Common myeloid progenitor, CD34-positive (primary cell): ENCODE measurements at regions of chr10 and their contacts with region 1.

Region 1: DNA sequence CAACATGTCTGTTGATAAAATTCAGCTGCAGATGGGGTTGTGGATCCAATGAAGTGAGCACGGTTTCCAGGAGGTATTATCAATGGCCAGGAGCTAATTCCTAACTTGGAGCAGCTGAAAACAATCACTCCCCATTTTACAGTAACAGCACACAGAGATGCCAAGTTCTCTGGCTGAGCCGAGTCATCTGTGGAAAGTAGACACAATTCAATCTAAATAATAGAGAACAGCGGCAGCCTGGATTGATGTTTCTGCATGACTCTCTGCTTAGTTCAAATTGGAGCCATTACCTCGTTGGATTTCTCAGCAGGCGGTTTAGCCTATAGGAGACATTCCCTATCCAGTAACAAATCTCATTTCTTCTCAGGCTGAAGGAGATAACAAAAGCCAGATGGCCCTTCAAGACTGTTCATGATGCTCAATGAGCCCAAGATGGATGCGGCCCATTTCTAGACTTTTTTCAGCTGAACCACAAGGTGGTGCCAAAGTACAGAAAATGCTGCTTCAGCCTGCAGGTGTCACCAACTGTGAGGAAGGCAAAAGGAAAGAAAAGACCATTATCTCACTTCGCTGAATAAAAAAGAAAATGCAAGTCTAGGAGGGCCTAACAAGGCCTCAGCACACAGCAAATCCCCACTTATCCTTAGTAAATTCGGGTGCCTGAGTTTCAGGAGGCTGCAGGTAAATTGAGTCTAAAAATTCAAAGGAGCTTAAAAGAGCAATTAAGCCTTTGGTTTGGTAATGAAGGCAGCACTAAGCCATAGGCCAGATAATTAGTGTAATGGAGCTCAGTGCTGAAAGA is 83.7 kb downstream of the SLC16A9 start:
- DNase-seq: peak; percentile 81 to 90 (median 88)
- H3K4me3 ChIP-seq: peak overlapping the region in 1 of 7 experiments; percentile 32
- H3K27ac ChIP-seq: no peak overlapping the region
- H3K4me1 ChIP-seq: peaks cover 0 to 9% (median 6%) of the 10 kb centered on the region in 4 experiments
- H3K27me3 ChIP-seq: no peaks in the 10 kb centered on the region

Region 2: DNA sequence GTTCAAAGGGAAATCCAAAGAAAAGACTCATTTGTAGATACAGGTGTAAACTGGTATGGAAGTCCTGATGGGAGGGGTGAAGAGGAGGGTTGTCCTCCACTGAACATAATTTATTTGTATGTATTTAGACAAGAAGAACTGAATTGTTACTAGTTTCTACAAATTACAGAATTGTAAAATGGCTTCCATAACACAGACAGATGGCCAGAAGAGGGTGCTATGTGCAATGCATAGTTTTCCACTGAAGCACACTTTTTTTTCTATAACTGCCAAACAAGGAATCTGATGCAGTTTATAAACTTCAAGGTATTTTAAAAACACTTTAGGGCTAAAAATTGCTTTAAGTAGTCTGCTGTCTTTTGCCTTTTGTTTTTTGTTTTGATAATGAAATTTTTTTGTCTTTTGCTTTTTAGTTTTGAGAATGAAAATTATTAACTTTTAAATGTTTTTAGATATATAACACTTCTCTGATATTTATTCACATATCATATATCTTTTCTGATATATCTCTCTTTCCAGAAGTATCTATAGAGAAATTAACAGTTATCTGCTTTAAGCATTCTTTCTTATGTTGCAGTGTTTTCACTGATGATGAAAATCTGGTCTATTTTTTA is 391.0 kb before region 1 on chr10:
- CTCF ChIA-PET with region 1: interaction called, 19 read pairs
- POLR2A ChIA-PET with region 1: no interaction called
- DNase-seq: peak; percentile 45 to 68 (median 66)
- H3K4me3 ChIP-seq: no peak overlapping the region
- H3K27ac ChIP-seq: no peak overlapping the region
- H3K4me1 ChIP-seq: no peaks in the 10 kb centered on the region
- H3K27me3 ChIP-seq: no peaks in the 10 kb centered on the region

Region 3: GRCh38 chr10:59808896-59809643 is 183.1 kb after region 1 on chr10:
- CTCF ChIA-PET with region 1: interaction called, 183 read pairs
- POLR2A ChIA-PET with region 1: no interaction called
- DNase-seq: peak; percentile 73 to 84 (median 80)
- H3K4me3 ChIP-seq: no peak overlapping the region
- H3K27ac ChIP-seq: peak overlapping the region in 1 of 2 experiments; percentile 30
- H3K4me1 ChIP-seq: peaks cover 9 to 21% (median 13%) of the 10 kb centered on the region in 4 experiments
- H3K27me3 ChIP-seq: no peaks in the 10 kb centered on the region

Region 4: DNA sequence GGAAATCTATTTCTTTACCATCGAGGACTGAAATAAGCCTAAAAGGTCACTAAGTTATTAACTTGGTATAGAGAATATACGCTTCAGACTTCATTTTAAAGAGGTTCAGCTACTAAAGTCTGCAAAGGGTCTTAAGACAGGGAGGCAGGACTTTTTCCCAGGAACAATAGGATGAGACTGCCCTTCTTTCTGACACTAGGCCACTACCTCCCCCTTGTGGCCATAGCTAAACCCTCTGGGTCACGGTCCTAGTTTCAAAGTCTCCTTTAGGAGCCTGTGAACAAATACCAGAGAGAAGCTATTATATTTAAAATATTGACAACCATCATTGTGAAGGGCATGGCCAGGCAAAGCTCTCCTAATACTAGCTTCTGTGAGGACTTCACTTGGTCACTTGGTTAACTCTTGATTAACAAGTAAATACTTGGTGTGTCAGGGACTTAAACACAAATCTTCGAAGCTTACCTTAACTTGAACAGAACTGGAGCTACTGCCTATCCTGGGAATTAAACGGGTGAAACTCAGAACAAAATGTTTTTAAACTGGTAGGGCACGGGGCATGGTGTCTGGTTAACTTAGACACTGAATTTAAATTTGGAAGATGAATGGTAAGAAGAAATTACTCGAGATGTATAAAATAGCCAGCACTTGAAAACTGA is 204.8 kb after region 1 on chr10:
- CTCF ChIA-PET with region 1: interaction called, 38 read pairs
- POLR2A ChIA-PET with region 1: interaction called, 3 read pairs
- DNase-seq: peak; percentile 55 to 62 (median 59)
- H3K4me3 ChIP-seq: no peak overlapping the region
- H3K27ac ChIP-seq: peak overlapping the region; percentile 94
- H3K4me1 ChIP-seq: peaks cover 40 to 94% (median 66%) of the 10 kb centered on the region in 4 experiments
- H3K27me3 ChIP-seq: no peaks in the 10 kb centered on the region

Region 5: DNA sequence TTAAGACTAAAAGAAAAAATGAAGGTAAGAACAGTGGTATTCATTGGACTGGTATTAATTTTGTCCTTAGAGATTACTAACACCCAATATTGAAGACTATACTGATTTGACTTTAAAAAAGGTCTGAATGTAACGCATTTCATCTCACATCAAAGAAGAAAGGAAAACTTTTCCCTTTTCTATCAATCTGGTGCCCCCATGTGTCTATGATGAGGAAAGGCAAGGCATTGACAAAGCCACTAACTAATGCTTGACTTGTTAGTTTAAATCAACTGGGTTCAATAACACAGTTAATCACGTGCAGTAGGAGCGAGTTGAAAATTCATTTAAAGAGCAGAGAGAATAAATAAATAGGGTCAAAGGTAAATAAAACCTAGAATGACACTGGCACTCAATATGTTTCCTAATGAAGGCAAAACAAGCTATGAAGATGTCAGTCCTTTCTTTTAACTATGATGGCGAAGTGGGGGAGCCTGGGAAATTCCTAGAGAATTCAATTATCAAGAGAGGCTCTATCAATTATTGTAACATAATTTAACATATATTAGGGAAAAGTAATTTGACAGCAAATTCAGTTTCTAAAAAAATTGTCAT is 582.9 kb after region 1 on chr10:
- CTCF ChIA-PET with region 1: interaction called, 12 read pairs
- POLR2A ChIA-PET with region 1: no interaction called
- DNase-seq: peak; percentile 34 to 52 (median 52)
- H3K4me3 ChIP-seq: no peak overlapping the region
- H3K27ac ChIP-seq: no peak overlapping the region
- H3K4me1 ChIP-seq: peaks cover 0 to 6% (median 3%) of the 10 kb centered on the region in 4 experiments
- H3K27me3 ChIP-seq: no peaks in the 10 kb centered on the region